ENCODE measurements at regions of chr19 and their contacts with region 1.

Region 1: GRCh38 chr19:47348819-47349795 is at the start of gene DHX34:
- DNase-seq: peak; percentile 100
- ATAC-seq: peak; percentile 97 to 98
- H3K4me3 ChIP-seq: peak within 1 kb of the TSS; percentile 74
- H3K27ac ChIP-seq: peak within 1 kb of the TSS; percentile 88 to 92
- H3K4me1 ChIP-seq: peaks cover 22% of the 10 kb centered on the region
- CTCF ChIP-seq: peak; percentile 97
- EP300 ChIP-seq: no peak
- POLR2A ChIP-seq: peak; percentile 91
- RAD21 ChIP-seq: peak in 1 of 2 experiments; percentile 45; a peak in 2 of 5 replicates
- polyA plus RNA-seq, gene DHX34: 12.4 and 14.4 TPM in 2 replicates

Region 2: GRCh38 chr19:47094557-47095475 is 254.3 kb before region 1 on chr19:
- CTCF ChIA-PET with region 1: no interaction called
- POLR2A ChIA-PET with region 1: no interaction called
- DNase-seq: no peak
- ATAC-seq: no peak; a peak in 1 of 6 replicates
- H3K4me3 ChIP-seq: no peak overlapping the region
- H3K27ac ChIP-seq: peak overlapping the region; percentile 43 to 68; a peak in 3 of 6 replicates
- H3K4me1 ChIP-seq: peaks cover 26% of the 10 kb centered on the region
- CTCF ChIP-seq: no peak
- EP300 ChIP-seq: no peak
- POLR2A ChIP-seq: no peak
- RAD21 ChIP-seq: no peak

Region 3: DNA sequence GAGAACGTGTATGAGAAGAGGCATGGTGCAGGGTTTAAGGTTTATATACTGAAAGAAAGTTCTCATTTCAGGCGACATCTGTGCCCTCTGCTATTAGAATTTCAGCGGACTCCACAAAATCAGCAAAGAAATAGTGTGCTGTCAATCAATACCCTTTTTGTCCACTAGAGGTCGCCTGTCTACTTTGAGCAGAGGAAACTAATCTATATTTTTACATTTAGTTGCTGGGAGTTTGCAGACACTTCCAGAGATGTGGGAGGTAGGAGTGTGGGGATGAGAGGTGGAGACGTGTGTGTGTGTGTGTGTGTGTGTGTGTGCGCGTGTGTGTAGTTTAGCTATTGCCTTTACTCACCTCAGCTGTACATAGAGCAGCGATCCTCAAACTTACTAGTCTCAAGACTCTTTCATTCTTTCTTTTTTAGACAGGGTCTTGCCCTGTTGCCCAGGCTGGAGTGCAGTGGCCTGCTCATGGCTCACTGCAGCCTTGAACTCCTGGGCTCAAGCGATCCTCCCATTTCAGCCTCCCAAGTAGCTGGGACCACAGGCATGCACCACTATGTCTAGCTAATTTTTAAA is 64.7 kb before region 1 on chr19:
- CTCF ChIA-PET with region 1: interaction called, 117 read pairs
- POLR2A ChIA-PET with region 1: interaction called, 3 read pairs
- DNase-seq: peak; percentile 50 to 77
- ATAC-seq: peak; percentile 34 to 35; a peak in 3 of 6 replicates
- H3K4me3 ChIP-seq: no peak overlapping the region
- H3K27ac ChIP-seq: no peak overlapping the region
- H3K4me1 ChIP-seq: peaks cover 12% of the 10 kb centered on the region
- CTCF ChIP-seq: peak; percentile 92
- EP300 ChIP-seq: no peak
- POLR2A ChIP-seq: no peak
- RAD21 ChIP-seq: peak; percentile 71 to 78

Region 4: DNA sequence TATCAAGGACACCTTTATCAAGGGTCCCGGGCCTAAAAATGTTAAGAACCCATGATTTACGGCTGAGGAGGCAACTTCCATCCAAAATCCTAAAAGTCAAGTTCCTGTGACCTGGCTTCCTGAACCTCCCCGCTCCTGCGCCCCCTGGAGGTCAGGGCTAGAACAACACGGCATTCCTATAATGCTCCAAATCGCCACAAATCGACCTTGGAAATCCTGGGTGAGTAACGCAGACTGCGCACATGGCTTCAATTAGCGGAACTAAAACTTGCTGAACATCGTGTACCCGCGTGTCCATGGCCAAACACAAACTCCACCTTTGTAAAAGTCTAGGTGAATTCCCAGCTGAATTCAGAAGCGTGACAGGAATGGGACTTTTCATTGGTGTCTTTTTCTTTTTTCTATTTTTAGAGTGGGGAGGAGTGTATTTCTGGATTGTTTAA is 43.8 kb before region 1 on chr19:
- CTCF ChIA-PET with region 1: interaction called, 117 read pairs
- POLR2A ChIA-PET with region 1: interaction called, 4 read pairs
- DNase-seq: peak; percentile 86 to 92
- ATAC-seq: peak; percentile 74 to 75
- H3K4me3 ChIP-seq: no peak overlapping the region
- H3K27ac ChIP-seq: peak overlapping the region; percentile 60 to 71
- H3K4me1 ChIP-seq: peaks cover 29% of the 10 kb centered on the region
- CTCF ChIP-seq: peak; percentile 99
- EP300 ChIP-seq: no peak
- POLR2A ChIP-seq: no peak
- RAD21 ChIP-seq: peak; percentile 58 to 62

Region 5: DNA sequence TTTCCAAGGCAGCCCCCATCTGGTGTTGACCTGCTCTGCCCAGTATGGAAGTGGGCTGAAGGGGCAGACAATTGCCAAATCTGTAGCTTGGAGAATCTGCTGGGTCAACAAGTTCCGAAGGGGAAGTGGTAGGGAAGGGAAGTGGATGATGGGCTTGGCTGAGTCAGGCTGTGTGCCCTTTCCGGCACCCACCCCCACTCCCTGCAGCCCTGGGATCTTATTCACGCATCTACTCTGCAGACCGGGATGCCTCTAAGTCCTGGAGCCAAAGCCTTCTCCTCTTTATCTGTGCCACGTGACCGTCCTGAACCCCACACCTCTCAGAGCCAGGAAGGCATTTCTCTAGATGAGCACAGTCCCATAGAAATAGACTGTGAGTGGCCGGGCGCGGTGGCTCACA is 24.6 kb before region 1 on chr19:
- CTCF ChIA-PET with region 1: interaction called, 72 read pairs
- POLR2A ChIA-PET with region 1: interaction called, 4 read pairs
- DNase-seq: no peak
- ATAC-seq: peak in 1 of 2 experiments; percentile 12; a peak in 1 of 6 replicates
- H3K4me3 ChIP-seq: no peak overlapping the region
- H3K27ac ChIP-seq: peak overlapping the region in 1 of 2 experiments; percentile 51; a peak in 3 of 6 replicates
- H3K4me1 ChIP-seq: no peaks in the 10 kb centered on the region
- CTCF ChIP-seq: no peak
- EP300 ChIP-seq: no peak
- POLR2A ChIP-seq: no peak
- RAD21 ChIP-seq: no peak

Region 6: DNA sequence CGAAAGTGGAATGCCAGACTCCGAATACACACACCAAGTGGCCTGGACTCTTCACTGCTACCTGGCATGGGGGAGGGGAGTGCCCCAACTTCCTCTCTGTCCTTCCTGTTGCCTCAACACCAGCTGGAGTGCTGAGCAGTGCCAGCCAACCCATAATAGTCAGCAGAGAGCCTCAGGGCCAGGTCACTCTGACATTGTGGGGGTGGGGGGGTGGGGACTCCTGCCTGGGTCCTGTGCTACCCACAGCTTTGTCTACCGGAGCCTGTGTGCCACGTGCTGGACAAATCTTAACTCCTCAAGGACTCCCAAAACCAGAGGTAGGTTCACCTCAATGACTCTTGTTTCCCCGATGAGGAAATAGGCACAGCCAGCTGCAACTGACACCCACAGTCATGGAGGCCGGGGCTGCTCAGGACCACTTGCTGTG is 12.2 kb before region 1 on chr19:
- CTCF ChIA-PET with region 1: interaction called, 72 read pairs
- POLR2A ChIA-PET with region 1: interaction called, 8 read pairs
- DNase-seq: peak in 1 of 2 experiments; percentile 32
- ATAC-seq: peak; percentile 13 to 36; a peak in 3 of 6 replicates
- H3K4me3 ChIP-seq: no peak overlapping the region
- H3K27ac ChIP-seq: peak overlapping the region in 1 of 2 experiments; percentile 54; a peak in 3 of 6 replicates
- H3K4me1 ChIP-seq: peaks cover 24% of the 10 kb centered on the region
- CTCF ChIP-seq: no peak
- EP300 ChIP-seq: no peak
- POLR2A ChIP-seq: no peak
- RAD21 ChIP-seq: no peak

Region 7: DNA sequence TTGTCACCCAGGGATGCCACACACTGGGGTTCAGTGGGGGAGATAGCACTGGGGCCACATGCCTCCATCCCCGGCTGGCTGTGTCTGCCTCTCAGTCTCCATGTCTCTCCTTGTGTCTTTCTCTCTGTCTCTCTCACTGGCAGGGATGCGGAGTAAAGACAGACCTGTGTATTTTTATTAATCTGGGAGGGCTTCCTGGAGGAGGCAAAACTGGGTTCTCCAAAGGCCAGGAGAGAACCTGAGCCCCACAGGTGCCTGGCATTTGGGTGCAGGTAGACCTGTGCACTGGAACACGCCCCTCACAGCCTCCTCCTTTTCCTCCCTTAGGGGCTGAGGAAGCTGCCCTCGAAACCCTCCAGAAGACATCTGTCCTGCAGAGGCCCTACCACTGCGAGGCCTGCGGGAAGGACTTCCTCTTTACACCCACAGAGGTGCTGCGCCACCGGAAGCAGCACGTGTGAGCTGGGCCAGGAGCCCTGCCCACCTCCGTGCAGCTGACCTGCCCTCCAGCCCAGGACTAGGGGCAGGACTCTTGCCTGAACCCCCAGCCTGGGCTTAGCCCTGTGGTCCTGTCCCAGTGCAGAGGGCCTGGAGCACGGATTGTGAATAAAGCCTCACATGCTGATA is 32.7 kb after region 1 on chr19:
- CTCF ChIA-PET with region 1: interaction called, 12 read pairs
- POLR2A ChIA-PET with region 1: interaction called, 3 read pairs
- DNase-seq: no peak
- ATAC-seq: no peak
- H3K4me3 ChIP-seq: no peak overlapping the region
- H3K27ac ChIP-seq: no peak overlapping the region
- H3K4me1 ChIP-seq: 0 out of 3 replicates have a peak, but pooled peaks cover 6% of the 10 kb centered on the region
- CTCF ChIP-seq: no peak
- EP300 ChIP-seq: no peak
- POLR2A ChIP-seq: no peak
- RAD21 ChIP-seq: no peak

Region 8: GRCh38 chr19:47633519-47633918 is 284.4 kb after region 1 on chr19:
- CTCF ChIA-PET with region 1: no interaction called
- POLR2A ChIA-PET with region 1: no interaction called
- DNase-seq: no peak
- ATAC-seq: no peak; a peak in 1 of 6 replicates
- H3K4me3 ChIP-seq: no peak overlapping the region
- H3K27ac ChIP-seq: no peak overlapping the region
- H3K4me1 ChIP-seq: peaks cover 14% of the 10 kb centered on the region
- CTCF ChIP-seq: no peak
- EP300 ChIP-seq: no peak
- POLR2A ChIP-seq: no peak
- RAD21 ChIP-seq: no peak

Measured in A549 (cell line).